ENCODE measurements at regions of chr15 and their contacts with region 1.

Region 1: DNA sequence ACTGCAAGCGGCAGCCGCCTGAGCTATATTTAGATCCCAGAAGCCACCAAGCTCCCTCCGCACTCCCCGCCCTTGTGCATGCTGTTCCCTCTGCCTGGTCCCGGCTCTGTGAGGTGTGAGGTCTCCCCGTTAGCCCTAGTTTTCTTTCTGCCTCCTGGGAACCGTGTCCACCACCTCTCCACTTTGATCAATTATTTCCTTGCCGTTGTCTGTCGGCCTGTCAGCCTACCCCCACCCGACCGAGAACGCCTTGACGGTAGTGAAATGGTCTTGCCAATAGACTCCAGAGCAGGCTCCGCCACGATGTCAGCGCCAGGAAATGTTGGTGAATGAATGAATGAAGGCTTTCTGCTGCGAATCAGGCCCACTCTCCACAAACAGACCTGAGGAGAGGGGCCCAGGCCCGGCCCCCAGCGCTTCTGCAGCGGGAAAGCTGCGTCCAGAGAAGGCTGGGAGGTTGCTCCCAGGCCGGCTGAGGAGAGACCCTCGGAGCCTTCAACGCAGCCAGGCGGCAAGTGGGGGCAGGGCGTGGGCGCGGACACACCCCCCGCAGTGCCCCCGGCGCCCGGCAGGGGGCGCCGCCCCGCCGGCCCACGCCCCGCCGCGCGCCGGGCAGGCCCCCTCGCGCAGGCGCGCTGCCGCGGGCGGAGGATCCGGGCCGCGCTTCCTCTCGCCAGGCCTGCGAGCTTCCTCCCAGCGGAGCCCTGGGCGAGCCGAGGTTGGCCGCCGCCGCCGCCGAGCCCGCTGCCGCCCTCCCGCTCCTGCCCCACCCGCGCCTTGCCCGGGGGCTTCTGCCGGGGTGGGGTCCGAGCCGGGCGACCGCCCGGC is at the start of gene CSK:
- DNase-seq: peak; percentile 68 to 90 (median 85)
- ATAC-seq: peak; percentile 80
- H3K4me3 ChIP-seq: peak within 1 kb of the TSS; percentile 91
- H3K4me3 Mint-ChIP-seq: peak within 1 kb of the TSS; percentile 87 to 99 (median 96)
- H3K27ac ChIP-seq: peak within 1 kb of the TSS; percentile 92
- H3K27ac Mint-ChIP-seq: peak within 1 kb of the TSS; percentile 90 to 100 (median 98)
- H3K4me1 ChIP-seq: peaks cover 62% of the 10 kb centered on the region in 2 donors
- H3K4me1 Mint-ChIP-seq: peaks cover 64 to 73% (median 70%) of the 10 kb centered on the region in 7 donors
- H3K27me3 ChIP-seq: no peaks in the 10 kb centered on the region
- H3K27me3 Mint-ChIP-seq: no peaks in the 10 kb centered on the region
- total RNA-seq, gene CSK: 163 to 421 (median 228) TPM

Region 2: DNA sequence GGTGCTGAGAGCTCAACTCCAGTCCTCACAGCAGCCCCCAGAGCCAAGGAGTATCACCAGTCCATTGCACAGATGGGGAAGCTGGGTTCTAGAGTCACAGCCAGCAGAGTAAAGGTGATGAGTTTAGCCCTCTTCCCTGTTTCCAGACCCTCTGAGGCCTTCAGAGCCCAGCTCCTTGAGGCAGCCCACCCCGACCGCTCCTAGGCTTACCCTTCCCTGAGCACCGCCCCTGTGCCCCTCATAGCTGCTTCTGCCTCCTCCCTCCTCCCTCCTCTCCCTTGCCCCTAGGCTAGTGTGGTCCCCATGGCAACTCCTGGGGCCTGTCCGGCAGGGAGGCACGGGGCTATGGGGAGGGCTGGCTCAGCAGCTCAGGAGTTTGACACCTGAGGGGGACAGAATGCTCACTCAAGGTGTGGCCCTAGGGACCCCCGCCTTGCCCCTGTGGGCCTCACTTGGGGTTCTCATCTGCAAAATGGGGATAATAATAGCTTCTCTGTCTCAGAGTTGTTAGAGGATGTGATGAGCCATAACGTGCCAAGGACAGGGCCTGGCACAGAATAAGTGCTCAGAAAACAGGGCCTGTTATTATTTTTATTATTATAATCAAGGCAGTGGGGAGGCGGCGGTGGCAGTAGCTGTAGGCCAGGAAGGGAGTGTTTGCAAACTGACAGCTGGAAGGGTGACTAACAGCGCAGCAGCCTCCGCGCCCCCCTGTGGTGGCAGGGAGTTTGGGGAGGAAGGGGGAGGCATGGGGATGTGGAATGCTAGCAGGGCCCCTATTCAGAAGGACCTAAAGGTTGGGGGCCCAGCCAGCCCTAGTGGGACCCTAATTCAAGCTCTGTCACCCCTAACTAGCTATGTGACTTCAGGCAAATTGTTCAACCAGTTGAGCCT is 11.7 kb after region 1 on chr15:
- CTCF ChIA-PET with region 1: interaction called, 1,110 read pairs
- POLR2A ChIA-PET with region 1: interaction called, 1,077 read pairs
- intact Hi-C with region 1: loop called (anchors 1 kb)
- DNase-seq: peak; percentile 62 to 78 (median 74)
- ATAC-seq: peak; percentile 63
- H3K4me3 ChIP-seq: peak overlapping the region; percentile 25
- H3K4me3 Mint-ChIP-seq: peak overlapping the region; percentile 51 to 97 (median 74)
- H3K27ac ChIP-seq: peak overlapping the region; percentile 92
- H3K27ac Mint-ChIP-seq: peak overlapping the region; percentile 49 to 98 (median 95)
- H3K4me1 ChIP-seq: peaks cover 89 to 98% of the 10 kb centered on the region in 2 donors
- H3K4me1 Mint-ChIP-seq: peaks cover 56 to 93% (median 82%) of the 10 kb centered on the region in 7 donors
- H3K27me3 ChIP-seq: no peaks in the 10 kb centered on the region
- H3K27me3 Mint-ChIP-seq: no peaks in the 10 kb centered on the region

Region 3: GRCh38 chr15:74799856-74800547 is 18.4 kb after region 1 on chr15:
- CTCF ChIA-PET with region 1: interaction called, 1,110 read pairs
- POLR2A ChIA-PET with region 1: interaction called, 1,077 read pairs
- intact Hi-C with region 1: loop called (anchors 1 kb)
- DNase-seq: peak; percentile 76 to 92 (median 85)
- ATAC-seq: peak; percentile 98
- H3K4me3 ChIP-seq: no peak overlapping the region
- H3K4me3 Mint-ChIP-seq: peak overlapping the region in 6 of 10 donors; percentile 13 to 61 (median 41)
- H3K27ac ChIP-seq: peak overlapping the region; percentile 92
- H3K27ac Mint-ChIP-seq: peak overlapping the region; percentile 66 to 93 (median 84)
- H3K4me1 ChIP-seq: peaks cover 51 to 54% of the 10 kb centered on the region in 2 donors
- H3K4me1 Mint-ChIP-seq: peaks cover 31 to 60% (median 48%) of the 10 kb centered on the region in 7 donors
- H3K27me3 ChIP-seq: no peaks in the 10 kb centered on the region
- H3K27me3 Mint-ChIP-seq: no peaks in the 10 kb centered on the region

Region 4: DNA sequence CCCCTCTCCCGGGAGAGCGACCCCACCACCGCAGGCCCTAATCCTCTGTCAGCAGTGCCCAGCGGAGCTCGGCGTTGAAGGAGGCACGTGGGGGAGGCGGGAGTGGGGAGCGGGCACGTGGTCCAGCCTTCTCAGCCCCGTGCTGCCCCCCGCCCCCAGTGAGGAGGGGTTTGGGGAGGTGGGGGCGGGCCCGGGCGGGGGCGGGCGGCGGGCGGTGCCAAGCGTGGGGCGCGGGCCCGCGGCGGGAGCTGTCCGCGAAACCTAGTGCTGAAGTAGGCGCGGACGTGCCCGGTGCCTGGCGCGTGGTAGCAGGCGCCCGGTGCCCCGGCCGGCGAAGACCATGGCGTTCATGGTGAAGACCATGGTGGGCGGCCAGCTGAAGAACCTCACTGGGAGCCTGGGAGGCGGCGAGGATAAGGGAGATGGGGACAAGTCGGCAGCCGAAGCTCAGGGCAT is 44.7 kb after region 1 on chr15 and contains the start of gene CPLX3:
- CTCF ChIA-PET with region 1: no interaction called
- POLR2A ChIA-PET with region 1: no interaction called
- intact Hi-C with region 1: no loop called
- DNase-seq: peak; percentile 20 to 76 (median 47)
- ATAC-seq: peak; percentile 83
- H3K4me3 ChIP-seq: no peak within 1 kb of the TSS
- H3K4me3 Mint-ChIP-seq: no peak within 1 kb of the TSS
- H3K27ac ChIP-seq: no peak within 1 kb of the TSS
- H3K27ac Mint-ChIP-seq: peak within 1 kb of the TSS in 1 of 9 donors; percentile 36
- H3K4me1 ChIP-seq: no peaks in the 10 kb centered on the region
- H3K4me1 Mint-ChIP-seq: peaks cover 0 to 6% (median 0%) of the 10 kb centered on the region in 7 donors
- H3K27me3 ChIP-seq: peaks cover 0 to 12% of the 10 kb centered on the region in 2 donors
- H3K27me3 Mint-ChIP-seq: peaks cover 21 to 35% (median 24%) of the 10 kb centered on the region in 5 donors
- total RNA-seq, gene CPLX3: 0.27 to 0.60 TPM in 2 of 5 experiments, not detected in the others

Region 5: GRCh38 chr15:74950078-74951000 is 168.7 kb after region 1 on chr15:
- CTCF ChIA-PET with region 1: interaction called, 4 read pairs
- POLR2A ChIA-PET with region 1: interaction called, 5 read pairs
- intact Hi-C with region 1: loop called in 1 of 2 experiments (anchors 2 kb)
- DNase-seq: peak; percentile 54 to 82 (median 75)
- ATAC-seq: peak; percentile 97
- H3K4me3 ChIP-seq: no peak overlapping the region
- H3K4me3 Mint-ChIP-seq: no peak overlapping the region
- H3K27ac ChIP-seq: no peak overlapping the region
- H3K27ac Mint-ChIP-seq: peak overlapping the region in 2 of 9 donors; percentile 28 to 54
- H3K4me1 ChIP-seq: no peaks in the 10 kb centered on the region
- H3K4me1 Mint-ChIP-seq: peaks cover 4 to 17% (median 10%) of the 10 kb centered on the region in 7 donors
- H3K27me3 ChIP-seq: no peaks in the 10 kb centered on the region
- H3K27me3 Mint-ChIP-seq: peaks cover 0 to 3% (median 0%) of the 10 kb centered on the region in 5 donors

Measured in naive thymus-derived CD4-positive, alpha-beta T cell (primary cell).